MCF 10A (cell line): ENCODE measurements at regions of chr2 and their contacts with region 1.

Region 1: GRCh38 chr2:172806493-172806892 is 70.8 kb downstream of the RAPGEF4 start:
- DNase-seq: peak; percentile 56
- H3K4me3 Mint-ChIP-seq: no peak overlapping the region
- H3K27ac Mint-ChIP-seq: no peak overlapping the region
- H3K4me1 Mint-ChIP-seq: no peaks in the 10 kb centered on the region
- H3K27me3 Mint-ChIP-seq: no peaks in the 10 kb centered on the region
- CTCF ChIP-seq: peak; percentile 81

Region 2: DNA sequence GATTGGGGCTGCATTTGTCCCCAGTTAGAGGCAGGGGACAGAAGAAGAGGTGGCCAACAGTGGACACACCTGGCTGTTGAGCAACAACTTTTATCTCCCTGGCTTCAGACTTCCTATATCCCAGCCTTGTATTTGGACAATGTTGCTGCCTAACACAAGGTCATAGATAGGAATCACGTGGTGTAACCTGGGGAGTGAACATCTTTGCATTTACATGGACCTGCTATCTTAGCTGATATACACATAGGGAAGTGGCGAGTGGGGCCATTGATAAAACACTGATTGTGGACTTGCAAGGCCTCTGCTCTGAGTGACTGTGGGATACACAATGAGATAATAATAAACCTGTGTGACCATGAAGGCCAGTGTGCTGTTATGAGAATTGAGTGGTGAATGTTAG is 43.9 kb before region 1 on chr2:
- CTCF ChIA-PET with region 1: no interaction called
- POLR2A ChIA-PET with region 1: no interaction called
- intact Hi-C with region 1: no loop called
- DNase-seq: no peak
- H3K4me3 Mint-ChIP-seq: no peak overlapping the region
- H3K27ac Mint-ChIP-seq: no peak overlapping the region
- H3K4me1 Mint-ChIP-seq: no peaks in the 10 kb centered on the region
- H3K27me3 Mint-ChIP-seq: no peaks in the 10 kb centered on the region
- CTCF ChIP-seq: no peak

Region 3: GRCh38 chr2:172790404-172790803 is 16.1 kb before region 1 on chr2:
- CTCF ChIA-PET with region 1: interaction called, 12 read pairs
- POLR2A ChIA-PET with region 1: interaction called, 3 read pairs
- intact Hi-C with region 1: no loop called
- DNase-seq: no peak
- H3K4me3 Mint-ChIP-seq: no peak overlapping the region
- H3K27ac Mint-ChIP-seq: peak overlapping the region; percentile 32
- H3K4me1 Mint-ChIP-seq: no peaks in the 10 kb centered on the region
- H3K27me3 Mint-ChIP-seq: no peaks in the 10 kb centered on the region
- CTCF ChIP-seq: no peak

Region 4: GRCh38 chr2:172864182-172864581 is 57.7 kb after region 1 on chr2:
- CTCF ChIA-PET with region 1: interaction called, 4 read pairs
- POLR2A ChIA-PET with region 1: no interaction called
- intact Hi-C with region 1: loop called (anchors 2 kb)
- DNase-seq: peak; percentile 72
- H3K4me3 Mint-ChIP-seq: no peak overlapping the region
- H3K27ac Mint-ChIP-seq: no peak overlapping the region
- H3K4me1 Mint-ChIP-seq: no peaks in the 10 kb centered on the region
- H3K27me3 Mint-ChIP-seq: peaks cover 10% of the 10 kb centered on the region
- CTCF ChIP-seq: peak; percentile 65

Region 5: GRCh38 chr2:172921532-172922236 is 115.2 kb after region 1 on chr2:
- CTCF ChIA-PET with region 1: interaction called, 19 read pairs
- POLR2A ChIA-PET with region 1: no interaction called
- intact Hi-C with region 1: no loop called
- DNase-seq: peak; percentile 29
- H3K4me3 Mint-ChIP-seq: no peak overlapping the region
- H3K27ac Mint-ChIP-seq: no peak overlapping the region
- H3K4me1 Mint-ChIP-seq: no peaks in the 10 kb centered on the region
- H3K27me3 Mint-ChIP-seq: peaks cover 11% of the 10 kb centered on the region
- CTCF ChIP-seq: no peak

Region 6: GRCh38 chr2:173021939-173022371 is 215.5 kb after region 1 on chr2:
- CTCF ChIA-PET with region 1: interaction called, 25 read pairs
- POLR2A ChIA-PET with region 1: no interaction called
- intact Hi-C with region 1: loop called (anchors 1 kb)
- DNase-seq: peak; percentile 74
- H3K4me3 Mint-ChIP-seq: no peak overlapping the region
- H3K27ac Mint-ChIP-seq: no peak overlapping the region
- H3K4me1 Mint-ChIP-seq: peaks cover 6% of the 10 kb centered on the region
- H3K27me3 Mint-ChIP-seq: no peaks in the 10 kb centered on the region
- CTCF ChIP-seq: peak; percentile 58

Region 7: GRCh38 chr2:173210270-173211196 is 404.0 kb after region 1 on chr2:
- CTCF ChIA-PET with region 1: interaction called, 3 read pairs
- POLR2A ChIA-PET with region 1: interaction called, 3 read pairs
- intact Hi-C with region 1: loop called (anchors 10 kb)
- DNase-seq: peak; percentile 94
- H3K4me3 Mint-ChIP-seq: no peak overlapping the region
- H3K27ac Mint-ChIP-seq: peak overlapping the region; percentile 93
- H3K4me1 Mint-ChIP-seq: peaks cover 9% of the 10 kb centered on the region
- H3K27me3 Mint-ChIP-seq: no peaks in the 10 kb centered on the region
- CTCF ChIP-seq: peak; percentile 84

Region 8: GRCh38 chr2:173402405-173402974 is 596.0 kb after region 1 on chr2:
- CTCF ChIA-PET with region 1: interaction called, 3 read pairs
- POLR2A ChIA-PET with region 1: no interaction called
- intact Hi-C with region 1: loop called (anchors 2 kb)
- DNase-seq: peak; percentile 87
- H3K4me3 Mint-ChIP-seq: peak overlapping the region; percentile 6
- H3K27ac Mint-ChIP-seq: no peak overlapping the region
- H3K4me1 Mint-ChIP-seq: peaks cover 11% of the 10 kb centered on the region
- H3K27me3 Mint-ChIP-seq: peaks cover 64% of the 10 kb centered on the region
- CTCF ChIP-seq: peak; percentile 86